Activated CD8-positive, alpha-beta T cell treated with anti-CD3 and anti-CD28 coated beads for 36 hours (primary cell): ENCODE measurements at regions of chr14 and their contacts with region 1.

Region 1: GRCh38 chr14:64636208-64636979 is 67.8 kb upstream of the PLEKHG3 start:
- DNase-seq: peak; percentile 80
- ATAC-seq: peak; percentile 97
- H3K4me3 Mint-ChIP-seq: no peak overlapping the region
- H3K27ac Mint-ChIP-seq: no peak overlapping the region
- H3K4me1 Mint-ChIP-seq: peaks cover 6% of the 10 kb centered on the region
- H3K27me3 Mint-ChIP-seq: peaks cover 2% of the 10 kb centered on the region
- CTCF ChIP-seq: peak; percentile 88

Region 2: GRCh38 chr14:64400829-64401459 is 235.4 kb before region 1 on chr14:
- CTCF ChIA-PET with region 1: no interaction called
- POLR2A ChIA-PET with region 1: no interaction called
- intact Hi-C with region 1: no loop called
- DNase-seq: no peak
- ATAC-seq: no peak
- H3K4me3 Mint-ChIP-seq: no peak overlapping the region
- H3K27ac Mint-ChIP-seq: no peak overlapping the region
- H3K4me1 Mint-ChIP-seq: peaks cover 11% of the 10 kb centered on the region
- H3K27me3 Mint-ChIP-seq: no peaks in the 10 kb centered on the region
- CTCF ChIP-seq: no peak

Region 3: GRCh38 chr14:64510825-64511671 is 125.3 kb before region 1 on chr14:
- CTCF ChIA-PET with region 1: interaction called, 14 read pairs
- POLR2A ChIA-PET with region 1: no interaction called
- intact Hi-C with region 1: no loop called
- DNase-seq: peak; percentile 81
- ATAC-seq: peak; percentile 28
- H3K4me3 Mint-ChIP-seq: peak overlapping the region; percentile 41
- H3K27ac Mint-ChIP-seq: peak overlapping the region; percentile 76
- H3K4me1 Mint-ChIP-seq: peaks cover 70% of the 10 kb centered on the region
- H3K27me3 Mint-ChIP-seq: no peaks in the 10 kb centered on the region
- CTCF ChIP-seq: peak; percentile 90

Region 4: GRCh38 chr14:64540208-64541157 is 95.9 kb before region 1 on chr14 and contains the start of gene HSPA2:
- CTCF ChIA-PET with region 1: interaction called, 28 read pairs
- POLR2A ChIA-PET with region 1: no interaction called
- intact Hi-C with region 1: no loop called
- DNase-seq: peak; percentile 95
- ATAC-seq: peak; percentile 95
- H3K4me3 Mint-ChIP-seq: peak within 1 kb of the TSS; percentile 79
- H3K27ac Mint-ChIP-seq: peak within 1 kb of the TSS; percentile 97
- H3K4me1 Mint-ChIP-seq: peaks cover 29% of the 10 kb centered on the region
- H3K27me3 Mint-ChIP-seq: peaks cover 31% of the 10 kb centered on the region
- CTCF ChIP-seq: peak; percentile 60
- total RNA-seq, gene HSPA2: 2.9 to 3.6 TPM

Region 5: DNA sequence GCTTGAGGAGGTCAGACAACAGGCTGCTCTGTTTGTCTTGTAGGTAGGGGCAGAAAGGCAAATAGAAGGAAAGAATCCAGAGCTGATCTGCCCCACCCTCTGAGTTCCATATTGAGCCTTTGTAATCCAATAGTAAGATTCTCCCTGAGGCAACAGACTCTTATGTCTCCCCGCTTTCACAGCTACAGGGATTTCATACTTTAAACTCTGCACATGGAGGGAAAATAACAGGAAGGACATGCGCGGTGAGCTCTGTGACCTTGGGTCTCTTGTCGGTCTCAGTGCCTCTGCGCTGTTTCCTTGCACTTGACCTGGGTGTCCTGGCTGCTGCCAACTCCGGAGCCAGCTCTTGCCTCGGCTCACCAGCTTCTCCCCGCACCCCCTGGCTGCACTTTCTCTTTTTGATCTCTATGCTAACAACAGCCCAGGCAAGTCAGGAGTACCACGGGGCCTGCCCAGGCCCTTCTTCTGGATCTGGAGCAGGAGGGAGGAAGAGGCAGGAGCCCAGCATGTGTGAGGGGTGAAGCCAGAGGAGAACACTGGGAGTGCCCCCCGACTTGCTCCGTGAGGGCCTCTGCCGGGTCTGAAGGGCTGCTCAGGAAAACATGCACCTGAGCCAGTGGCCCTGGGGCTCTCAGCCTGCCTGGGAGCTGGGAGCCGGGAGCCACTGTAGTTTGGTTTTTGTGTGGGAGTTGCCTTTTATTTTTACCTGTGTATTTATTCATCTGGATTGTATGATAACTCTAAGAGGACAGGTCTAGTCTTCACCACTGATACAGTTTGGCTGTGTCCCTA is 10.7 kb before region 1 on chr14:
- CTCF ChIA-PET with region 1: interaction called, 34 read pairs
- POLR2A ChIA-PET with region 1: no interaction called
- intact Hi-C with region 1: no loop called
- DNase-seq: no peak
- ATAC-seq: no peak
- H3K4me3 Mint-ChIP-seq: no peak overlapping the region
- H3K27ac Mint-ChIP-seq: no peak overlapping the region
- H3K4me1 Mint-ChIP-seq: no peaks in the 10 kb centered on the region
- H3K27me3 Mint-ChIP-seq: no peaks in the 10 kb centered on the region
- CTCF ChIP-seq: no peak

Region 6: GRCh38 chr14:64726585-64726890 is 90.1 kb after region 1 on chr14:
- CTCF ChIA-PET with region 1: no interaction called
- POLR2A ChIA-PET with region 1: no interaction called
- intact Hi-C with region 1: no loop called
- DNase-seq: peak; percentile 28
- ATAC-seq: peak; percentile 40
- H3K4me3 Mint-ChIP-seq: no peak overlapping the region
- H3K27ac Mint-ChIP-seq: no peak overlapping the region
- H3K4me1 Mint-ChIP-seq: peaks cover 19% of the 10 kb centered on the region
- H3K27me3 Mint-ChIP-seq: no peaks in the 10 kb centered on the region
- CTCF ChIP-seq: no peak

Region 7: DNA sequence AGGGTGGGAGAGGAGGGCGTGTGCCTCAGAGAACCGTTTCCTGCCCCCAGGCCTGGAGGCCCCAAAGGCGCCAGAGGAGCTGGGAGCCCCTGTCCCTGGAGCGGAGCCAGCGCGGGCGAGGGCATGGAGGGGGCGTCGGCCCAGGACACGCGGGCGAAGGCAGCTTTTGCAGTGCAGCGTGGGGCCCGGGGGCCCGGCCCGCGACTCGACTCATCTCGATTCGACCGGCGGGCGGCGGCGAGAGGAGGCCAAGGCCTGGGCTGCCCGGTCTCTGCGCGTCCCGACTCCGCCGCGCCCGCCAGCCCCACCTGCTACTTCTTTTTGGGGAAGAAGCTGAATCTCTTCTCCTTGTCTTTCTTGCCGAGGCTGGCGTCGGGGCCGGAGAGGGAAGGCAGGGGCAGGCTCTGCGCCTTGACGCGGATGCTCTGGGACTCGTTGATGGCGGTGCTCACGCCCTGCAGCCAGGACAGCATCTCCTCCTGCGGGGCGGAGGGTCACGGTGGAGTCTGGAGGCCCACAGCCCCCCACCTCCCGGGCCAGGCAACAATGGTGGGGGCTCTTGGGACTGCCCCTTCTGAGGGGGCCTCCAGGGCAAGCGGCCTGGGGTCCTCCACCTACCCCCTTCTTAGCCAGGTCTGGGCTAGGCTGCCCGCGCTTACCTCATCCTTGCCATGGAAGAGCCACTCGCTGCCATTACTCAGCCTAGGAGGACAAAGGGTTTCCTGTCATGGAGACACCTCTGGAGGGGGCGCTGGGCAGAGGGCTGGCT is 112.8 kb after region 1 on chr14:
- CTCF ChIA-PET with region 1: no interaction called
- POLR2A ChIA-PET with region 1: no interaction called
- intact Hi-C with region 1: no loop called
- DNase-seq: no peak
- ATAC-seq: no peak
- H3K4me3 Mint-ChIP-seq: no peak overlapping the region
- H3K27ac Mint-ChIP-seq: no peak overlapping the region
- H3K4me1 Mint-ChIP-seq: no peaks in the 10 kb centered on the region
- H3K27me3 Mint-ChIP-seq: no peaks in the 10 kb centered on the region
- CTCF ChIP-seq: no peak